Dendritic cell treated with granulocyte-macrophage colony-stimulating factor and Interleukin-4, amounts not matched to agents 40 ng/mL and 50 ng/mL, for 4 days (primary cell): ENCODE measurements at regions of chr14 and their contacts with region 1.

Region 1: DNA sequence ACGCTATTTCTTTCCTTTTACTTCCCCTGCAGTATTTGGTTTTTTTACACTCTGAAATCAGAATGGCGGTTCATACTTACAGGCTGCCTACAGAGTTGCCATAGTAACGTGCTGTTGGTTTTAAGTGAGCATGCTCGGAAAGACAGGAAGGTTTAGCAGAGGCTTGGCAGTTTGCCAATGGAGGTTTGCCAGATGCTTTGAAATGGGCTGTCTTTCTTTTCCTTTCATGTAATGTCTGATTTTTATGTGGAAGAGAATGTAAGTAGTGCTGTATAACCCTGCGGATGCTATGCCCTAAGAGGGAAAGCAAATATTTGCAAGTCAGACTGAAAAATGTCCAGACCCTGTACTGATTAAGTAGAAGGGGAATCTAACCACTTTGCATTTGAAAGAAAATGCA is 32.8 kb downstream of the ARID4A start:
- H3K4me3 Mint-ChIP-seq: no peak overlapping the region
- H3K27ac Mint-ChIP-seq: peak overlapping the region; percentile 69
- H3K4me1 Mint-ChIP-seq: peaks cover 18% of the 10 kb centered on the region
- H3K27me3 Mint-ChIP-seq: no peaks in the 10 kb centered on the region

Region 2: GRCh38 chr14:58376791-58377190 is 45.7 kb after region 1 on chr14:
- intact Hi-C with region 1: loop called (anchors 10 kb)
- H3K4me3 Mint-ChIP-seq: no peak overlapping the region
- H3K27ac Mint-ChIP-seq: no peak overlapping the region
- H3K4me1 Mint-ChIP-seq: no peaks in the 10 kb centered on the region
- H3K27me3 Mint-ChIP-seq: no peaks in the 10 kb centered on the region

Region 3: GRCh38 chr14:58587271-58587670 is 256.2 kb after region 1 on chr14:
- intact Hi-C with region 1: no loop called
- H3K4me3 Mint-ChIP-seq: no peak overlapping the region
- H3K27ac Mint-ChIP-seq: no peak overlapping the region
- H3K4me1 Mint-ChIP-seq: no peaks in the 10 kb centered on the region
- H3K27me3 Mint-ChIP-seq: no peaks in the 10 kb centered on the region